ENCODE measurements at regions of chr14 and their contacts with region 1.

Region 1: GRCh38 chr14:99266181-99267178 is 5.5 kb downstream of the BCL11B start:
- DNase-seq: peak; percentile 93
- ATAC-seq: peak; percentile 28
- H3K4me3 Mint-ChIP-seq: peak overlapping the region; percentile 88
- H3K27ac Mint-ChIP-seq: peak overlapping the region; percentile 98
- H3K4me1 Mint-ChIP-seq: peaks cover 59% of the 10 kb centered on the region
- H3K27me3 Mint-ChIP-seq: no peaks in the 10 kb centered on the region

Region 2: GRCh38 chr14:99158150-99158549 is 108.3 kb before region 1 on chr14:
- CTCF ChIA-PET with region 1: no interaction called
- POLR2A ChIA-PET with region 1: no interaction called
- DNase-seq: no peak
- ATAC-seq: no peak
- H3K4me3 Mint-ChIP-seq: no peak overlapping the region
- H3K27ac Mint-ChIP-seq: no peak overlapping the region
- H3K4me1 Mint-ChIP-seq: peaks cover 8% of the 10 kb centered on the region
- H3K27me3 Mint-ChIP-seq: no peaks in the 10 kb centered on the region

Region 3: GRCh38 chr14:99192028-99192621 is 74.4 kb before region 1 on chr14:
- CTCF ChIA-PET with region 1: interaction called, 86 read pairs
- POLR2A ChIA-PET with region 1: interaction called, 14 read pairs
- DNase-seq: peak; percentile 56
- ATAC-seq: peak; percentile 20
- H3K4me3 Mint-ChIP-seq: peak overlapping the region; percentile 88
- H3K27ac Mint-ChIP-seq: peak overlapping the region; percentile 95
- H3K4me1 Mint-ChIP-seq: peaks cover 93% of the 10 kb centered on the region
- H3K27me3 Mint-ChIP-seq: no peaks in the 10 kb centered on the region

Region 4: DNA sequence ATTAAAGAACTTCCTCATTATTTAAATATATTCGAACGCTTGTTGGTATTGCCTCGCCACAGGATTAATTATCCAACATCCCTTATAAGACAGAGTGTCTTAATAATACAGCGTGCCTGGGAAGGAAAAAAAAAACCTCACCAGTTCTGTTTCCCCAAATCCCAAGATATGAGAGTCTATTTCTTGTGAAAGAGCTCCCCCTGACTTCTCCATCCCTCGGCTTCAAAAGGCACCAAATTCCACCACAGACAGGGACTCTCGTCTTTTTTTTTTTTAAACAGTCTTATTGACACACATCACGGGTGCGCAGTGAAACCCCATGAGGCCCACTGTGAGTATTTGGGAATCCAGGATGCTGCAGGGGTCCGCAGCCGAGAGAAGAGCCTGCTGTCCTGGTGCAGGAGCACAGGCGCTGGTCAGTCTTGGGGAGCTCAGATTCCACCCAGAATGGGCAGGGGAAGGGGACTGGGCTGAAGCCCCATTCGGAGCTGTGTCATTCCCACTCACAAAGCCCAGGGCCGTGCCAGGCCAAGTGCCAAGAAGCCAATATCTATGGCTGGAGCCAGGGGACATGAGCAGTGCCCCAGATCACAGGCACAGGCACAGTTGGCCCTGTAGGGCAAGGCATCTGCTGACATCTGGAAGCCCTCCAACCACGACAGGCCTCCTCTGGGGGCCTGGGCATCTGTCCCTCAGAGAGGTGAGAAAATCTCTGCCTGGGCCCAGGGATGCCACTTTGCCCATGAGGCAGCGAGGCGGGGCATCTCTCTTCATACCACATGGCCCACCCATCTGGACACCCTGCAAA is 66.4 kb before region 1 on chr14:
- CTCF ChIA-PET with region 1: interaction called, 13 read pairs
- POLR2A ChIA-PET with region 1: interaction called, 6 read pairs
- DNase-seq: no peak
- ATAC-seq: no peak
- H3K4me3 Mint-ChIP-seq: peak overlapping the region; percentile 38
- H3K27ac Mint-ChIP-seq: peak overlapping the region; percentile 74
- H3K4me1 Mint-ChIP-seq: peaks cover 98% of the 10 kb centered on the region
- H3K27me3 Mint-ChIP-seq: no peaks in the 10 kb centered on the region

Region 5: DNA sequence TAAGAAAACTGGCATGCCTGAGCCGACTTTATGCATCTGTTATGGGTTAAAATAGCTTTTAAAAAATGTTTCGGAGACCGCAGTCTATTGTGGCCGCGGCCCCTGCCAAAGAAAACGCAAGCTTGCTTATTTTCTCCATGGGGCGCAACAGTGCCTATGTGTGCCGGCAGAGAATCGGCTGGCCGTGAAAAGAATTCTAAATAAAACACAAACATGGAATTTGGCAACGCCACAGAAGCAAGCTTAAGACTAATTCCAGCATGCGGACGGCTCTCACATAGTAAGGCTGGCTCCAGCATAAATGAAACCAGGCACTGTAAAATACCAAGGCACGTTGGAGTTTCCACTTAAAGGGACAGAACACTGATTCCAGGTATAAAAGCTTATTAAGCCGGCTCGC is 51.2 kb before region 1 on chr14:
- CTCF ChIA-PET with region 1: interaction called, 24 read pairs
- POLR2A ChIA-PET with region 1: interaction called, 8 read pairs
- DNase-seq: no peak
- ATAC-seq: no peak
- H3K4me3 Mint-ChIP-seq: peak overlapping the region; percentile 60
- H3K27ac Mint-ChIP-seq: peak overlapping the region; percentile 64
- H3K4me1 Mint-ChIP-seq: peaks cover 94% of the 10 kb centered on the region
- H3K27me3 Mint-ChIP-seq: no peaks in the 10 kb centered on the region

Region 6: DNA sequence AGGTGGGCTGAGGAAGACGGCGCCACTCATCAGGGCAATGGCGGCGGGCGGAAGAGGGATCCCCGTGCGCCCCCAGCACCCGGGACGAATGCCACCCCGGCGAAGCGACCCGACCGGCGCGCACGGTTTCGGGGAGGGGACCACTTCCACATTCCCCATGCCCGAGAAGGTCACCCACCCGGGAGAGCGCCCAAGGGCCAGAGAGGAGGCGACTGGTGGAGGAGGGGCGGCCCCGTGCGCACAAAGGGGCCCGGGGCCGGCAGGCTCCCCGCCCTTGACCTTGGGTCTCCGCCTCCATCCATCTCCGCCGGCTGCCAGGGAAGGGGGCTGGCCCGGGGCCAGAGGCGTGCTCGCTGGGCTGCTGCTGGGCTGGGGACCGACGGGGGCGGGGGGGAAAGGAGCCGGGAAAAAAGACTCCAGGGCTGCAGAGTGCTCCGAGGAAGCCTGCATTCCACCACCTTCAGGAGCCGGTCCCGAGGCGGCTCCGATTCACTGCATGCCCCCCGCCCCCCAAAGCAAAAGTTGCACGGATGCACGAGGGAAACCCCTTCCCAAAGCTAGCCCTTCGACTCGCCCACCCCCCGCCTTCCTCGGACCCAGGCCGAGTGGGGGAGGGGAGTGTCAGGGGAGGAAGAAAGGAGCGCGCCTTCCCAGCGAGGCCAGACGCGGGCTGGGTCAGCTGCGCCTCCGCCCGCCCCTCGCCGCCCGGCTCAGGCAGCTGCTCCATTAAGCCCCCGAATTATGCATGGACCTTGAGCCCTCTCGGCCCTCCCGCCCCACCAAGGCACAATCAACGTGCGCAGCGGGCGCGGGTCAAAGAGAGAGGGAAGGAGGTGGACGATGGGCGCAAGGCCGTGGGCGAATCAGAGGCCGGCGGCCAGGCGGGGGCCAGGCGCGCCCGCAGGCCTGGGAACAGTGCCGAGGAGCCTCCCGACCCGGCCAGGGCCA is 20.6 kb before region 1 on chr14:
- CTCF ChIA-PET with region 1: interaction called, 373 read pairs
- POLR2A ChIA-PET with region 1: interaction called, 767 read pairs
- DNase-seq: no peak
- ATAC-seq: no peak
- H3K4me3 Mint-ChIP-seq: peak overlapping the region; percentile 73
- H3K27ac Mint-ChIP-seq: peak overlapping the region; percentile 88
- H3K4me1 Mint-ChIP-seq: peaks cover 83% of the 10 kb centered on the region
- H3K27me3 Mint-ChIP-seq: no peaks in the 10 kb centered on the region

Region 7: GRCh38 chr14:99252940-99253868 is 13.3 kb before region 1 on chr14:
- CTCF ChIA-PET with region 1: interaction called, 41 read pairs
- POLR2A ChIA-PET with region 1: interaction called, 767 read pairs
- DNase-seq: peak; percentile 72
- ATAC-seq: peak; percentile 32
- H3K4me3 Mint-ChIP-seq: peak overlapping the region; percentile 76
- H3K27ac Mint-ChIP-seq: peak overlapping the region; percentile 95
- H3K4me1 Mint-ChIP-seq: peaks cover 98% of the 10 kb centered on the region
- H3K27me3 Mint-ChIP-seq: no peaks in the 10 kb centered on the region

Region 8: GRCh38 chr14:99277530-99277929 is 11.1 kb after region 1 on chr14:
- CTCF ChIA-PET with region 1: interaction called, 22 read pairs
- POLR2A ChIA-PET with region 1: interaction called, 70 read pairs
- DNase-seq: no peak
- ATAC-seq: no peak
- H3K4me3 Mint-ChIP-seq: no peak overlapping the region
- H3K27ac Mint-ChIP-seq: no peak overlapping the region
- H3K4me1 Mint-ChIP-seq: peaks cover 49% of the 10 kb centered on the region
- H3K27me3 Mint-ChIP-seq: peaks cover 28% of the 10 kb centered on the region

Measured in activated CD8-positive, alpha-beta T cell treated with anti-CD3 and anti-CD28 coated beads, Interleukin-2, amount 10 ng/mL, durations not matched to agents 7 days and 5 days (primary cell).